ENCODE measurements at regions of chr11 and their contacts with region 1.

Region 1: GRCh38 chr11:65988791-65989592 is 13.0 kb downstream of the EIF1AD start:
- DNase-seq: peak; percentile 98
- H3K4me3 ChIP-seq: no peak overlapping the region
- H3K27ac ChIP-seq: peak overlapping the region in 3 of 4 donors; percentile 1 to 43 (median 20)
- H3K4me1 ChIP-seq: peaks cover 0 to 26% (median 13%) of the 10 kb centered on the region in 4 donors
- H3K27me3 ChIP-seq: no peaks in the 10 kb centered on the region
- CTCF ChIP-seq: peak; percentile 90 to 99 (median 90)
- EP300 ChIP-seq: no peak
- POLR2A ChIP-seq: no peak

Region 2: GRCh38 chr11:65711785-65712632 is 277.0 kb before region 1 on chr11 and contains the start of gene KAT5:
- intact Hi-C with region 1: loop called (anchors 5 kb)
- DNase-seq: peak; percentile 100
- H3K4me3 ChIP-seq: peak within 1 kb of the TSS; percentile 67 to 92 (median 72)
- H3K27ac ChIP-seq: peak within 1 kb of the TSS; percentile 95 to 99 (median 98)
- H3K4me1 ChIP-seq: peaks cover 21 to 45% (median 24%) of the 10 kb centered on the region in 4 donors
- H3K27me3 ChIP-seq: no peaks in the 10 kb centered on the region
- CTCF ChIP-seq: peak; percentile 97 to 99 (median 99)
- EP300 ChIP-seq: no peak
- POLR2A ChIP-seq: peak; percentile 89
- total RNA-seq, gene KAT5: 66.4 to 77.1 (median 68.3) TPM

Region 3: GRCh38 chr11:65779851-65780577 is 209.0 kb before region 1 on chr11:
- intact Hi-C with region 1: loop called (anchors 2 kb)
- DNase-seq: peak; percentile 94
- H3K4me3 ChIP-seq: peak overlapping the region; percentile 73 to 99 (median 92)
- H3K27ac ChIP-seq: peak overlapping the region; percentile 79 to 85 (median 81)
- H3K4me1 ChIP-seq: peaks cover 12 to 46% (median 45%) of the 10 kb centered on the region in 4 donors
- H3K27me3 ChIP-seq: peaks cover 0 to 9% (median 0%) of the 10 kb centered on the region in 4 donors
- CTCF ChIP-seq: peak; percentile 87 to 99 (median 95)
- EP300 ChIP-seq: no peak
- POLR2A ChIP-seq: no peak

Region 4: DNA sequence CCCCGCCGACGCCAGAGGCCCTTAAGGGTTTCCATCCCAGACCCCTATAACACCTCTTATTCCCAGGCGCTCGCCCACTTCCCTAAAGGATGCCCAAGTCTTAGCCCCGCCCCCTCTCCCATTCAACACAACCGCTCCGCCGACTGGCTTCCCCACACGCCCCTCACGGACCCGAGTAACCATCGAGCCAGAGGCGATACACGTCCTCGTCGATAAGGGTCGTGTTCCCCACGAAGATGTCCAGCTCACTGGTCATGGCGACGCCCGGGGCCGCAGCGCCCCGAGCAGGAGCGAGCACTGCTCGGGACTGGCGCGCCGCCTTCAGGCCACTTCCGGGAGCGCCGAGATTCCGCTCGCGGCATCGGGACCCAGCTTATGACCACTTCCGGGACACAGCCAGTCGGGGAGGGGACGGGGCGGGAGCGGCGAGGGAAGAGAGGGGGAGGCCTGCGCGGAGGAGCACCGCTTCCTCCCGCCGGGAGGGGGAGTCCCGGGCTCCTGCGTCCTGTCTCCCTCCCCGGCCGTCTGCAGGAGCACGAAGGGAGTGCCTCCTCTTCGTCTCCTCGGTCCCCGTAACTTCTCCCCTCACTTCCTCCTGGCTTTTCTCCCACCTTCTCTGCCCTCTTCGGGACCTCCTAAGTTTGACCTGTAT is 100.7 kb before region 1 on chr11 and contains the start of gene FIBP:
- intact Hi-C with region 1: loop called (anchors 1 kb)
- DNase-seq: peak; percentile 99
- H3K4me3 ChIP-seq: peak within 1 kb of the TSS; percentile 71 to 84 (median 78)
- H3K27ac ChIP-seq: peak within 1 kb of the TSS; percentile 96 to 100 (median 98)
- H3K4me1 ChIP-seq: peaks cover 43 to 83% (median 70%) of the 10 kb centered on the region in 4 donors
- H3K27me3 ChIP-seq: no peaks in the 10 kb centered on the region
- CTCF ChIP-seq: peak; percentile 62 to 87 (median 86)
- EP300 ChIP-seq: no peak
- POLR2A ChIP-seq: peak; percentile 85
- total RNA-seq, gene FIBP: 33.2 to 74.3 (median 48.6) TPM

Region 5: GRCh38 chr11:65919146-65920033 is 69.6 kb before region 1 on chr11 and contains the start of gene DRAP1:
- intact Hi-C with region 1: loop called (anchors 10 kb)
- DNase-seq: peak; percentile 99
- H3K4me3 ChIP-seq: peak within 1 kb of the TSS; percentile 68 to 99 (median 88)
- H3K27ac ChIP-seq: peak within 1 kb of the TSS; percentile 91 to 99 (median 96)
- H3K4me1 ChIP-seq: peaks cover 49 to 61% (median 58%) of the 10 kb centered on the region in 4 donors
- H3K27me3 ChIP-seq: no peaks in the 10 kb centered on the region
- CTCF ChIP-seq: peak in 1 of 3 experiments; percentile 36
- EP300 ChIP-seq: no peak
- POLR2A ChIP-seq: peak; percentile 60
- total RNA-seq, gene DRAP1: 78.4 to 122 (median 101) TPM